ENCODE measurements at regions of chr2 and their contacts with region 1.

Region 1: GRCh38 chr2:42095923-42096408 is 48.1 kb downstream of the PKDCC start:
- DNase-seq: peak; percentile 80
- ATAC-seq: peak; percentile 57
- H3K4me3 ChIP-seq: no peak overlapping the region
- H3K27ac ChIP-seq: no peak overlapping the region
- H3K4me1 ChIP-seq: peaks cover 30% of the 10 kb centered on the region
- H3K27me3 ChIP-seq: no peaks in the 10 kb centered on the region
- CTCF ChIP-seq: peak; percentile 79

Region 2: GRCh38 chr2:41859615-41860520 is 236.1 kb before region 1 on chr2:
- intact Hi-C with region 1: no loop called
- DNase-seq: no peak
- ATAC-seq: peak; percentile 42
- H3K4me3 ChIP-seq: no peak overlapping the region
- H3K27ac ChIP-seq: no peak overlapping the region
- H3K4me1 ChIP-seq: no peaks in the 10 kb centered on the region
- H3K27me3 ChIP-seq: peaks cover 10% of the 10 kb centered on the region
- CTCF ChIP-seq: no peak

Region 3: DNA sequence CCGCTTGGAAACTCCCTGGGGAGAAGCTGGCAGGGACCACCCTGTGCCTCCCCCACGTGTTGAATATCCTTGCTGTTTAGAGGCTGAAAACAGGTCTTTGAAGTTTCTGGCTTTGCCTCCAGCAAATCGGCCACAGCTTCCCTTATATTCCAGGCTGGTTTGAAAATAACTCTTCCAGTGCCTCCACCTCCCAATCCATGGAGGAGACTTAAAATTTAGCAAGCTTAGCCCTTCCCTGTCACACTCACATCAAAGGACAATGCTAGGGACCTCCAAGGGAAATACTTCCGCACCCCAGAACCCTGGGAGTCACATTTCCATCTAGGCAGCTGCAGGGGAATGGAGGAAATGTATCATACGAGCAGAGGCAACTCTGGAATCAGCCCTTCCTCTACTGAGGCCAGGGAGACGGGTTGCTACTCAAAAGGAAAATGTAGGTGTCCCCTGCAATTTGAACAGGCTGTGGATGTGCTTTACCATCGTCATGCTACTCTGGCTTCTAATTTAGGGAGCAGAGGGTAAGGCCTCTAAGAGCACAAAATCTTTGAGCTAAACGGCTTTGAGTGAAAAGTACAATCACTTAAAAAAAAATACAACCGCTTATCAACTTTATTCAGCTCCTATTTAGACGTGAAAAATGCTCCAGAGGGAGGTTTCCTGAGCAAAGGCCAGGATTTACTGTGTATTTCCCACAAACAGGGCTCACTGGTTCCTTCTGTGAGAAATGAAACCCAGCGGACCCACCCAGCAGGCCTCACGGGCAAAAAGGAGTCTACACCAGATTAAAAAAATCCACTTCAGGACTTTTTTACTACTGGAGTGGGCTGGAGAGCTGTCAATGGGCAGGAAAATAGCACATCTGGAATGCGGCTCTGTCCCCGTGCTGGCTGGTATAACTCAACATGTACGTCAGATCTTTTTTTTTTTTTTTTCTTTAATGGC is 97.5 kb before region 1 on chr2:
- intact Hi-C with region 1: no loop called
- DNase-seq: no peak
- ATAC-seq: peak; percentile 72
- H3K4me3 ChIP-seq: no peak overlapping the region
- H3K27ac ChIP-seq: peak overlapping the region; percentile 17
- H3K4me1 ChIP-seq: no peaks in the 10 kb centered on the region
- H3K27me3 ChIP-seq: no peaks in the 10 kb centered on the region
- CTCF ChIP-seq: no peak

Region 4: DNA sequence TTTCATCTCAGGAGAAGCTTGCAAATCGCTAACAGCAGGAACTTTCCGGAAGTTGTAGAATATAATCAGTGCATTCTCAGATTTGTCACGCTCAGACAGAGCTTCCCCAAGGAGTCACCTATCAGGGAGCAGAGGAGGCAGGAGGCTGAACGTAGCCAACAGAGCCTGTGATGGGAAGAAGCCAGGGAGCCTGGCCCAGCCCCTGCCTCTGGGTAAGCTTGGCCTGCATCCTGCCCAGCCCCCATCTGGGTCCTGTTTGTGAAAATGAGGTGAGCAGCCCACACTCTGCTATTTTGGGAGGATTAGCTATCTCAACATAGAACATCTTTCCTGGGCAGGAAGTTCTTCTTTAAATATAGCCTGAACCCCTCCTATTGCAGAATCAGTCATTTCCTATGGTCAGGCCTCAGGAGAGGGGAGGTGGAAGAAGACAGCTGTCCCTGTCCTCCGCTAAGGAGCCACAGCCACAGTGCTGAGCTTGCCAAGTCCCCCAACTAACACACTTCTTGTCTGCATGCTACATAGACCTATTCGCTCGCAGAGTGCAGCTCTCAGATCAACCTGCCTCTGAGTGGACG is 67.3 kb before region 1 on chr2:
- intact Hi-C with region 1: no loop called
- DNase-seq: peak; percentile 25
- ATAC-seq: no peak
- H3K4me3 ChIP-seq: no peak overlapping the region
- H3K27ac ChIP-seq: no peak overlapping the region
- H3K4me1 ChIP-seq: no peaks in the 10 kb centered on the region
- H3K27me3 ChIP-seq: no peaks in the 10 kb centered on the region
- CTCF ChIP-seq: no peak

Region 5: DNA sequence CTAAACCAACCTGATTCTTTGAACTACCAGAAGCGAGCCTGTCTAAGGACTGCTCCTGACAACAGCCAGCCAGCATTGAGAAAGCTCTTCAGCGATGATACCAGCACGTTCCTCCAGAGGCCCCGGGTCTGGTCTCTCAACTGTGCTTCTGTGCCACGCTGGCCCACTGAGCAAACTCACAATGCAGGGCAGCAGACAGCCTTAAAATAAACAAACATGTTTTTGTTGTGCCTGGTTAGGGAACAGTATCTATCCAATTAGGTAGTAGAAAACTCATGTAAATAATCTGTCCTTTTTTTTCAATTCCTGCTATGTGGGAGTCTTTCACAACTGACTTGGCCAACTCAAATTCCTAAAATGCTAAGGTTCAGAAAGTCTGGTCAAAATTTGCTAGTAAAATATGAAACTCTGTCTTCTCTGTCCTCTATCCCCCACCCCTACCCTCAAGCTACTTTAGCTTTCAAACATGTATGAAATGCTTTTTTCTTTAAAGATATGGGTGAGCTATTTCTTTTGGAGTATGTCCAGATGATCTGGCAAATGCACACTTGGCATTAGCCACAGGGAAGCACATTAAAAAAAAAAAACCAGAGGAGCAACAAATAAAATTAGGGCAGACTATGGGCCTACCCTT is 51.8 kb after region 1 on chr2:
- intact Hi-C with region 1: no loop called
- DNase-seq: no peak
- ATAC-seq: peak; percentile 54
- H3K4me3 ChIP-seq: no peak overlapping the region
- H3K27ac ChIP-seq: peak overlapping the region; percentile 65
- H3K4me1 ChIP-seq: peaks cover 9% of the 10 kb centered on the region
- H3K27me3 ChIP-seq: no peaks in the 10 kb centered on the region
- CTCF ChIP-seq: no peak

Region 6: DNA sequence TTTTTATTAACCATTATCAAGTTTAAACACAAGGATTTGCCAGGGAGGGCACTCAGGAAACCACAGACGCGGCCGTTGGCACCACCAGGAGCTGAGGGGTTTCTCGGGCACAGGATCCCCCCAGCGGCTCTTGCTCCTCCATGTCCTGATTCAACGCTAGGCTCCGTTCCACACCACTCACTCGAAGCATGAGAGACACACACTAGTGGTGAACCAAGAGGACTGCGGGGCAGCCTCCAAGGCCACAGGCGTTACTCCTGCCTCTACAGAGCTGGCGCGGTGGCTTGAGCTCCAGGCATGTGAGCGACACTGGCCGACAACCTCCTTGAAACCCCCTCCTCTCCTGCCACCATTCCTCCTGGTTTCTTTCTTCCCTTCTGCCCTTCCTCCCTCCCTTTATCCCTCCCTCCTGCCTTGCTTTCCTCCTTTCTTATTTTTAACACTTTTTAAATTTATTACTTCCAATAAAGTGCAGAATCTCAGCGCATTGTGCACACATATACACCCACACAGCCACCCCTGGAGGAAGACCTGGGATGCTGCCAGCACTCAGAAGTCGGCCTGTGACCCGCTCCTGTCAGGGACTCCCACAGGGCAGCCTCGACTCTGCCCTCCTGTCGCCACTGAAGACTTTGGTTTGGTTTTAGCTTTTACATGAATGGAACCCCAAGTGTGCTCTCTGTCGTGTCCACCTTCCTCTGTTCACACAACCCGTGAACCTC is 243.4 kb after region 1 on chr2:
- intact Hi-C with region 1: loop called (anchors 10 kb)
- DNase-seq: no peak
- ATAC-seq: peak; percentile 5
- H3K4me3 ChIP-seq: no peak overlapping the region
- H3K27ac ChIP-seq: no peak overlapping the region
- H3K4me1 ChIP-seq: peaks cover 17% of the 10 kb centered on the region
- H3K27me3 ChIP-seq: no peaks in the 10 kb centered on the region
- CTCF ChIP-seq: no peak